ENCODE measurements at regions of chr20 and their contacts with region 1.

Region 1: GRCh38 chr20:5056801-5057599 is 55.7 kb upstream of the SLC23A2 start:
- DNase-seq: peak; percentile 79
- H3K4me3 Mint-ChIP-seq: no peak overlapping the region
- H3K27ac Mint-ChIP-seq: peak overlapping the region; percentile 88
- H3K4me1 Mint-ChIP-seq: peaks cover 31% of the 10 kb centered on the region
- H3K27me3 Mint-ChIP-seq: peaks cover 2% of the 10 kb centered on the region

Region 2: GRCh38 chr20:4929686-4930397 is 127.2 kb before region 1 on chr20:
- CTCF ChIA-PET with region 1: no interaction called
- POLR2A ChIA-PET with region 1: no interaction called
- DNase-seq: no peak
- H3K4me3 Mint-ChIP-seq: no peak overlapping the region
- H3K27ac Mint-ChIP-seq: no peak overlapping the region
- H3K4me1 Mint-ChIP-seq: peaks cover 16% of the 10 kb centered on the region
- H3K27me3 Mint-ChIP-seq: no peaks in the 10 kb centered on the region

Region 3: DNA sequence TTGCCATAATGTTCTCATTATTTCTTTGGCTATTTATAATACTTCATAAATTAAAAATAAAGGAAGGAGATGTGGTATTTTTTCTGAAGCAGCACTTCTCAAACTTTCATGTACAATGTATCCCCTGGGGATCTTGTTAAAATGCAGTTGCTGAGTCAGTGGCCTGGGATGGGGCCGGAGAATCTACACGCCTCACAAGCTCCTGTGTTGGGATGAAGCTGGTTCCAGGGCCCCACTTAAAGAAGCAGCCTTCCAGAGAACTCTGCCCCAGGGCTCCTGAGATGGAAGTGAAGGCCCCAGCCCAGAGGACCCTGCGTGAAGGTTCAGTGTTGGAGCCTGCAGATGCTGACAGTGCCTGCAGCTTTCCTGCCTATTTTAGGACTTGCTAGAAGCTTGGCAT is 15.6 kb before region 1 on chr20:
- CTCF ChIA-PET with region 1: interaction called, 22 read pairs
- POLR2A ChIA-PET with region 1: interaction called, 3 read pairs
- DNase-seq: no peak
- H3K4me3 Mint-ChIP-seq: no peak overlapping the region
- H3K27ac Mint-ChIP-seq: no peak overlapping the region
- H3K4me1 Mint-ChIP-seq: peaks cover 11% of the 10 kb centered on the region
- H3K27me3 Mint-ChIP-seq: peaks cover 8% of the 10 kb centered on the region

Region 4: GRCh38 chr20:5078399-5078958 is 21.5 kb after region 1 on chr20:
- CTCF ChIA-PET with region 1: interaction called, 37 read pairs
- POLR2A ChIA-PET with region 1: interaction called, 14 read pairs
- DNase-seq: peak; percentile 90
- H3K4me3 Mint-ChIP-seq: peak overlapping the region; percentile 68
- H3K27ac Mint-ChIP-seq: peak overlapping the region; percentile 97
- H3K4me1 Mint-ChIP-seq: peaks cover 54% of the 10 kb centered on the region
- H3K27me3 Mint-ChIP-seq: no peaks in the 10 kb centered on the region

Region 5: GRCh38 chr20:5100684-5101347 is 43.8 kb after region 1 on chr20:
- CTCF ChIA-PET with region 1: interaction called, 112 read pairs
- POLR2A ChIA-PET with region 1: interaction called, 18 read pairs
- DNase-seq: peak; percentile 77
- H3K4me3 Mint-ChIP-seq: no peak overlapping the region
- H3K27ac Mint-ChIP-seq: no peak overlapping the region
- H3K4me1 Mint-ChIP-seq: peaks cover 12% of the 10 kb centered on the region
- H3K27me3 Mint-ChIP-seq: no peaks in the 10 kb centered on the region

Region 6: GRCh38 chr20:5191829-5192569 is 135.0 kb after region 1 on chr20:
- CTCF ChIA-PET with region 1: interaction called, 10 read pairs
- POLR2A ChIA-PET with region 1: no interaction called
- DNase-seq: peak; percentile 48
- H3K4me3 Mint-ChIP-seq: no peak overlapping the region
- H3K27ac Mint-ChIP-seq: peak overlapping the region; percentile 60
- H3K4me1 Mint-ChIP-seq: peaks cover 28% of the 10 kb centered on the region
- H3K27me3 Mint-ChIP-seq: no peaks in the 10 kb centered on the region

Measured in activated CD4-positive, alpha-beta memory T cell treated with anti-CD3 and anti-CD28 coated beads, Interleukin-2, amount 10 ng/mL, durations not matched to agents 7 days and 5 days (primary cell).